Aorta (tissue), 5 donors: ENCODE measurements at regions of chr16 and their contacts with region 1.

Region 1: DNA sequence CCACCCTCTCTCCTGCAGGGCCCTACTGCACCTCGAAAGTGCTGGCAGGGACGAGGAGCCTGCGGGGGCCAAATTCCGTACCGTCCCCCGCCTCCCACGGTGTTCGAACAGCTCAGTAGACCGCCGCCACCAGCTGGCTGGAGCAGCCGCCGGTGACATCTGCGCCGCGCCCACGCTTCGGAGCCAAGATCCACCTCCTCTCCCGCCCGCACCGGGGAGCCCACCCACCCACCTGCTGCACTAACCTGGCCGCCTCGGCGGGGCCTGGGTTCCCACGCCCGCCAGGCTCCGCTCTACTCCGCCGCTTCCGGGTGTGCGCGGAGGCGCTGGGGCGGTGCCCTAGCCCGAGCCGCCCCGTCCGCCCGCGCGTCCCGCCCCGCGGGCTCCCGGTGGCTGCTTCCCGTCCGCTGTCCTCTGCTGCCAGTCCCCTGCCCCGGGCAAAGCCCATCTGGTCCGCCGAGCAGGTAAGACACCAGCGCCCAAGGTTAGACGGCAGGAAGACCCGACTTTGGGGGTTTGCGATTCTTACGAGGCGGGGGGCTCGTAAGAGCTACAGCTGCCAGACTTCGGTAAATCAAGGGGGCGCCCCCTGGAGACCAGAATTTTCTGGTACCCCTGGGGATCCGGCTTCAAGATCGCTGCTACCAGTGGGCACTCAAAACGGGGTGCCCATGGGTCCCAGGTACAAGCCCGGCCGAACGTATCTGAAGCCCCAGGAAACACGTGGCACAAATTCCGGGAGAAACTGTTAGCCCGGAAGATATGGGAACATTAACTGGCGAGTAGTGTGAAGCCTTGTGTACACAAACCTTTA is at the starts of genes FBXL8 and TRADD:
- DNase-seq: peak; percentile 82 to 92
- ATAC-seq: peak; percentile 79
- H3K4me3 ChIP-seq: peak within 1 kb of the TSS; percentile 68 to 93
- H3K27ac ChIP-seq: peak within 1 kb of the TSS in 1 of 2 donors; percentile 19
- H3K4me1 ChIP-seq: no peaks in the 10 kb centered on the region
- H3K27me3 ChIP-seq: no peaks in the 10 kb centered on the region
- total RNA-seq, gene FBXL8: 7.3 to 20.8 TPM
- total RNA-seq, gene TRADD: 17.1 to 24.3 TPM

Region 2: GRCh38 chr16:66894948-66895688 is 264.7 kb before region 1 on chr16:
- intact Hi-C with region 1: loop called (anchors 5 to 10 kb)
- DNase-seq: peak; percentile 79 to 83
- ATAC-seq: peak; percentile 76
- H3K4me3 ChIP-seq: no peak overlapping the region
- H3K27ac ChIP-seq: no peak overlapping the region
- H3K4me1 ChIP-seq: peaks cover 0 to 4% of the 10 kb centered on the region in 2 donors
- H3K27me3 ChIP-seq: no peaks in the 10 kb centered on the region

Region 3: GRCh38 chr16:66977341-66978113 is 182.3 kb before region 1 on chr16:
- intact Hi-C with region 1: loop called (anchors 1 to 2 kb)
- DNase-seq: peak; percentile 92 to 97
- ATAC-seq: peak; percentile 94
- H3K4me3 ChIP-seq: no peak overlapping the region
- H3K27ac ChIP-seq: no peak overlapping the region
- H3K4me1 ChIP-seq: no peaks in the 10 kb centered on the region
- H3K27me3 ChIP-seq: no peaks in the 10 kb centered on the region

Region 4: DNA sequence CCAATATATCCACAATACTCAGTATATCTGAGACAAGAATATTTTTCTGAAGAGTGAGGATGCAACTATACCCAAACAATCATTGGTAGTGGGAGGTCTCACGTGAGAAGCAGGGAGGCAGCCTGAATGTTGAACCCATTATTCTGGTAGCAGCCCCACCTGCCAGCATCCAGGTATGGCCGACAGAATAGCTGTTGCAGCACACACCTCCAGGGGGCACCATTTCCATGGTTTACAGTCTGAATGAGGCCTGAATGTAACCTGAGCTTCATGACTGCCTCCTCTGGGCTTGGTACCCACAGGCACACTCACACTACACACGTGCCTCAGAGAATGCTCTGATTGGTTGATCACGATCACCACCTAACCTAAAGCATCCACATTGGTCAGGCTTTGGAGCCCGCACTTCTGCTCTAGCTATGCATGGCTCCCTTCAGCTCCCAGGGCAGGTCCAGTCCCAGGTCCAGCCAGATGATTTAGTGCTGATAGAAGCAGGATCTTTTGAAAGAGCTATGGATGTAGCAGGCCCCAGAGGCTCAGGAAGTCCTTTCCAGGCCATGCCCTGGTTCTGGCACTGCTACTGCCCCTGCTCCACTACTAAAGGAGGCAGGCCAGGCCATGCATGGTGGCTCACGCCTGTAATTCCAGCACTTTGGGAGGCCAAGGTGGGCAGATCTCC is 141.9 kb before region 1 on chr16:
- intact Hi-C with region 1: loop called in 1 of 2 experiments (anchors 5 kb)
- DNase-seq: peak; percentile 72 to 79
- ATAC-seq: peak; percentile 46
- H3K4me3 ChIP-seq: no peak overlapping the region
- H3K27ac ChIP-seq: no peak overlapping the region
- H3K4me1 ChIP-seq: no peaks in the 10 kb centered on the region
- H3K27me3 ChIP-seq: no peaks in the 10 kb centered on the region

Region 5: GRCh38 chr16:67183627-67184328 is 24.0 kb after region 1 on chr16 and contains the start of gene MATCAP1:
- intact Hi-C with region 1: loop called in 1 of 2 experiments (anchors 2 kb)
- DNase-seq: peak; percentile 97
- ATAC-seq: peak; percentile 94
- H3K4me3 ChIP-seq: peak within 1 kb of the TSS; percentile 24 to 54
- H3K27ac ChIP-seq: peak within 1 kb of the TSS in 1 of 2 donors; percentile 81
- H3K4me1 ChIP-seq: no peaks in the 10 kb centered on the region
- H3K27me3 ChIP-seq: no peaks in the 10 kb centered on the region
- total RNA-seq, gene MATCAP1: 18.1 to 33.8 TPM

Region 6: GRCh38 chr16:67459066-67459860 is 299.5 kb after region 1 on chr16:
- intact Hi-C with region 1: no loop called
- DNase-seq: peak in 1 of 2 donors; percentile 79
- ATAC-seq: peak; percentile 53
- H3K4me3 ChIP-seq: no peak overlapping the region
- H3K27ac ChIP-seq: peak overlapping the region; percentile 2 to 54
- H3K4me1 ChIP-seq: no peaks in the 10 kb centered on the region
- H3K27me3 ChIP-seq: no peaks in the 10 kb centered on the region